ENCODE measurements at regions of chr12 and their contacts with region 1.

Region 1: GRCh38 chr12:4630262-4630661 is 18.6 kb downstream of the AKAP3 start:
- DNase-seq: no peak

Region 2: DNA sequence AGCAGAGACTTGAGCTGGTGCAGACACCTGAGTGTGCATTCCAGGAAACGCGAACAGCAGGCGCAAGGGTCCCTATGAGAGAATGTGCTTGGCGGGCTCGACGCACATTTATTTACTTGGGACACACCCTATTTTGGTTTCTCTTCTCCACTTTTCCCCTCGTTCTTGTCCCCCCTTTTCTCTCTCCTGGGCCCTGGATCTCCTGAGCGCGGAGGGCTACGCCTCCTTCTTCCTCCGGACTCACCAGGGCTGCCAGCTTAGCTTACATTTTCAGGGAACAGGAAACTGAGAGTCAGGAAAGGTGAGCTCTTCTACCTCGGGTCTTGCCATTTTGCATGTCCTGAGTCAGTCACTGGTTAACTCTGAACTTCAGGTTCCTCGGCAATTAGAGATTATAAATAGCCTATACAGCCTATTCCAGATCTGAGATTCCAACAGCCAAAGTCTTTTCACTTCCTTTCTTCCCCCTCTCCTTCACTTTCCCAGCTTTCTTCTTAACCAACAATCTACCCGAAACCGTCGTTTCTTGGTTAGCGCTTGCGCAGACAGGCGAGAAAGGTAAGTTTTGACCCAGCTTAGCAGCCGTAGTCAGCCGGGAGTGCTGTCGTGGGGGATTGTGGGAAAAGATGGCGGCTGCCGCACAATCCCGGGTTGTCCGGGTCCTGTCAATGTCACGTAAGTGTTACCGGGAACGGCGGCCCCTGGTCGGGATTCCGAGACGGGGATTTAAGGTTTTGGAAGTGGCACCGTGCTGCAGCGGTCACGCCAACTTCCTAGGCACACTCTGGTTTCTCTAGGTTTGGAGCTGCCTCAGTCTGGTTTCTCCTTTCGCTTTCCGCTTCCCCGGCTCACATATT is 18.5 kb after region 1 on chr12 and contains the starts of genes AKAP3 and NDUFA9:
- CTCF ChIA-PET with region 1: no interaction called
- POLR2A ChIA-PET with region 1: interaction called, 10 read pairs
- DNase-seq: peak; percentile 82

Region 3: GRCh38 chr12:4736061-4736460 is 105.8 kb after region 1 on chr12:
- CTCF ChIA-PET with region 1: no interaction called
- POLR2A ChIA-PET with region 1: no interaction called
- DNase-seq: no peak

Measured in HEK293T (cell line).